Activated B cell treated with CpG ODN at 0.5 μM for 24 hours (primary cell): ENCODE measurements at regions of chr3 and their contacts with region 1.

Region 1: DNA sequence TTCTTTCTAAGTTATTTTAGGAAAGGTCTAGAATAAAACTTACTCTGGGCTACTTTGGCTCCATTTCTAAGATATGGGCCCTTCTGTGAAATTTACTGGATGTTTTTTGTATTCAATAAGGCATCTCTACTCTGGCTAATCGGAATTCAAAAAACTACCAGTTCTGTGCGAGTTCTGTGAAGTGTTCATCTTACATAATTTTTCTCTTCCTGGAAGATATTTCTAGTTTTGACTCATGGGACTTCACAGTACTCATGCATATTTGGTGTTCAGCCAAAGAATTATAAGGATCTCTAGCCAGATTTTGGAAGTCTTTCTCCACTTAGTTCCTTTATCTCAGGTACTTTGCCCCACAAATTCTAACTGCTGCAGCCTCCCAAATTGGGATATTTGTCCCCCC is 46.4 kb upstream of the MBNL1 start:
- DNase-seq: no peak
- ATAC-seq: peak; percentile 32
- H3K4me3 Mint-ChIP-seq: peak overlapping the region; percentile 60
- H3K27ac Mint-ChIP-seq: peak overlapping the region; percentile 82
- H3K4me1 Mint-ChIP-seq: peaks cover 66% of the 10 kb centered on the region
- H3K27me3 Mint-ChIP-seq: no peaks in the 10 kb centered on the region
- CTCF ChIP-seq: no peak

Region 2: DNA sequence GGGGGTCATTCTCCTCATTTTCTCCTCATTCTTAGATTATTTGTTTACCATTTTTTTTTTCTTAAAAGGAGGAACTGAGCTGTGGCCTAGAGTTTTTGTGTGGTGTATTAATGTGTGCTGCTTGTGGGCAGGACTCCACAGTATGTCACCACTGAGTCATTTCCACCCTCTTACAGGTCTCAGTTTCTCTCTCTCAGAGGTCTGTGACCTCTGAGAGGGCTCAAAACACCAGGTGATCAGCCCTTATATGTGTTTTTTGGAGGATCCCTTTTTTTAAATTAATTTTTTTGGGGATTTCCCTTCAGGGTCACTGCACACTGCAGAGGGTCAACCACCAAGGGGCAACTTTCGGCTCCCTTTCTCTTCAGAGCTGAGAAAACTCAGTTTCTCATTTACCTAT is 182.4 kb before region 1 on chr3:
- CTCF ChIA-PET with region 1: no interaction called
- POLR2A ChIA-PET with region 1: interaction called, 11 read pairs
- intact Hi-C with region 1: no loop called
- DNase-seq: no peak
- ATAC-seq: peak; percentile 76
- H3K4me3 Mint-ChIP-seq: no peak overlapping the region
- H3K27ac Mint-ChIP-seq: no peak overlapping the region
- H3K4me1 Mint-ChIP-seq: peaks cover 9% of the 10 kb centered on the region
- H3K27me3 Mint-ChIP-seq: no peaks in the 10 kb centered on the region
- CTCF ChIP-seq: no peak

Region 3: GRCh38 chr3:152205097-152205593 is 17.2 kb before region 1 on chr3:
- CTCF ChIA-PET with region 1: no interaction called
- POLR2A ChIA-PET with region 1: interaction called, 21 read pairs
- intact Hi-C with region 1: loop called (anchors 1 kb)
- DNase-seq: no peak
- ATAC-seq: peak; percentile 72
- H3K4me3 Mint-ChIP-seq: peak overlapping the region; percentile 95
- H3K27ac Mint-ChIP-seq: peak overlapping the region; percentile 99
- H3K4me1 Mint-ChIP-seq: peaks cover 58% of the 10 kb centered on the region
- H3K27me3 Mint-ChIP-seq: no peaks in the 10 kb centered on the region
- CTCF ChIP-seq: no peak

Region 4: GRCh38 chr3:152235709-152236298 is 13.5 kb after region 1 on chr3:
- CTCF ChIA-PET with region 1: no interaction called
- POLR2A ChIA-PET with region 1: interaction called, 4 read pairs
- intact Hi-C with region 1: loop called (anchors 1 kb)
- DNase-seq: no peak
- ATAC-seq: no peak
- H3K4me3 Mint-ChIP-seq: no peak overlapping the region
- H3K27ac Mint-ChIP-seq: no peak overlapping the region
- H3K4me1 Mint-ChIP-seq: peaks cover 68% of the 10 kb centered on the region
- H3K27me3 Mint-ChIP-seq: no peaks in the 10 kb centered on the region
- CTCF ChIP-seq: no peak

Region 5: GRCh38 chr3:152241142-152242017 is 19.1 kb after region 1 on chr3:
- CTCF ChIA-PET with region 1: no interaction called
- POLR2A ChIA-PET with region 1: interaction called, 20 read pairs
- intact Hi-C with region 1: no loop called
- DNase-seq: no peak
- ATAC-seq: no peak
- H3K4me3 Mint-ChIP-seq: peak overlapping the region; percentile 62
- H3K27ac Mint-ChIP-seq: peak overlapping the region; percentile 90
- H3K4me1 Mint-ChIP-seq: peaks cover 77% of the 10 kb centered on the region
- H3K27me3 Mint-ChIP-seq: no peaks in the 10 kb centered on the region
- CTCF ChIP-seq: no peak